Calu3 (cell line): ENCODE measurements at regions of chr1 and their contacts with region 1.

Region 1: DNA sequence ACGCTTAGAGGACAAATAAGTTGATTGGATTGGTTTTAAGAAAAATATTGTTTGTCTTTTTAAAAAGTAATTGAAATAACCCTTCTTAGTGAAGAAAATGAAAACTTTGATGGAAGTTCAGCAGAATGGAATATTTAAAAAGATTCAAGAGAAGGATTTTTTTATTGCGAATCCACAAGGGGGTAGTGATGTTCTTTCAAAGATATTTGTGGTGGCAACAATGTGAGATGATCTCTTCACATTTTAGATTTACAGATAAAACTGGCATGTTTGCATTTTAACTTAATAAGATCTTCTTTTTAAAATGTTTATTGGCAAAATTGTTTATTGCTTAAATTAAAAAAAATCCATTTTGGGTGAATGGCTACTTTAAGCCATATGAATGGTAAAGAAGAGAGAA is 8.9 kb downstream of the CAMTA1 start:
- DNase-seq: peak; percentile 21
- H3K4me3 Mint-ChIP-seq: no peak overlapping the region
- H3K27ac Mint-ChIP-seq: no peak overlapping the region
- H3K4me1 Mint-ChIP-seq: peaks cover 6% of the 10 kb centered on the region
- H3K27me3 Mint-ChIP-seq: no peaks in the 10 kb centered on the region
- CTCF ChIP-seq: peak; percentile 14

Region 2: DNA sequence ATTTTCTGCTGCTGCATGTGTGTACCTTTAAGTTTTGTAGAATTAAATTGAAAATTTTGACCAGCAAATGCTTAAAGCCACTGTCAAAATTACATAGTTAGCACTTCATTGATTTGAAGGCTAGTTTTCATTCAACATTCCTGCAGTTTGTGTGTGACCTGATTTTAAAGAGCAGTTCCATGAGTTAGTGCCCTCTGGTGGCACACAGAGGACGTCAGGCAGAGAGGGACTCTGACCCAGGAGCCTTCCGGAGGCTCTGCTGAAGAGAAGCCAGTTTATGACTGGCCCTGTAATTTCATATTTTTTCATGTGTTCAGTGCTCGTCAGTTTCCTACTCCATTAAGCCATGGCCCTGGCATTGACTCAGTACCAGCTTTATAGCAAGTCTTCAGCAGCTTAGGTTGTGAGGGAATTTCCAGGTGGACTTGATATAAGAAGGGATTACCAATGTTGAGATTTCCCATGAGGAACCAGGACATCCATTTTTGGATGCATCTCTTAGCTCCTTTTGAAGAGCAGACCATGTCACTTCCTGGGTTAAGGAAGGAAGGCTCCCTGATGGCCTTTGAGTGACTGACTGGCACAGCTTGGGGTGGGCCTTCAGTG is 95.8 kb after region 1 on chr1:
- CTCF ChIA-PET with region 1: interaction called, 3 read pairs
- intact Hi-C with region 1: loop called (anchors 2 kb)
- DNase-seq: peak; percentile 57
- H3K4me3 Mint-ChIP-seq: no peak overlapping the region
- H3K27ac Mint-ChIP-seq: no peak overlapping the region
- H3K4me1 Mint-ChIP-seq: peaks cover 9% of the 10 kb centered on the region
- H3K27me3 Mint-ChIP-seq: no peaks in the 10 kb centered on the region
- CTCF ChIP-seq: peak; percentile 56

Region 3: GRCh38 chr1:7070389-7071029 is 276.3 kb after region 1 on chr1:
- CTCF ChIA-PET with region 1: no interaction called
- intact Hi-C with region 1: loop called (anchors 2 kb)
- DNase-seq: peak; percentile 67
- H3K4me3 Mint-ChIP-seq: no peak overlapping the region
- H3K27ac Mint-ChIP-seq: no peak overlapping the region
- H3K4me1 Mint-ChIP-seq: no peaks in the 10 kb centered on the region
- H3K27me3 Mint-ChIP-seq: peaks cover 60% of the 10 kb centered on the region
- CTCF ChIP-seq: peak; percentile 80

Region 4: DNA sequence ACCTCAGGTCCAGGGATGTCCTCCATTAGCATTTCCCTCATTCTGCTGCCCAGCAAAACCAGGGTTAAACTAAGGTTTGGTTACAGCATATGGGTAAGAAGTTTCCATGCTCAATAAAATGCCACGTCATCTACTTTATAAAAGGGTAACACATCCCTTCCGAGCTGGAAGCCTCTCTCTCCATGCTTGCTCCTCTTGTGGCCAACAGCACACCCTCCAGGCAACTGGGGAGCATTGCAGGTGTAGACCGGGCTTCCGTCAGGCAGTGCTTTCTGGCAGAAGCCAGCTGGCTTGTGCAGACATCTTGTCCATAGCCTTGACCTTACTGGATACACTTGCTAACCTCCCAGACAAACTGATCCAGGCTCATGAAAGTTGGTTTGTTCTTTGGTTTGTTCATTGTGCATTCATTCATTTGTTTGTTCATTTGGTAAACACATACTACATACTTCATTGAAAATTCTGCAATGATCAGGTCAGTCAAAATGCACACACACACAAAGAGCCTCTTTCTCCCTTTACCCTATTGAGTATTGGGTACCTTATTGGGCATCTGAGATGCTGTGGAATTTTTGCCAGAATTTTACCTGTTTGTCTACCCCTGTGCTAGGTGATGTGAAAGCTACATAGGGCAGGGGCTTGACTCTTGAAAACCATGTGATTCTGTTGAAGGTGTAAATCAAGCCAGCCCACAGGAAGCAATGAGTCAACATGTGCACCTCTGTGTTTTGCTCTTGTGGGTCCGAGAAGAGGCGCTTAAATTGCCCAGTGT is 413.9 kb after region 1 on chr1:
- CTCF ChIA-PET with region 1: interaction called, 3 read pairs
- intact Hi-C with region 1: loop called (anchors 2 kb)
- DNase-seq: peak; percentile 73
- H3K4me3 Mint-ChIP-seq: no peak overlapping the region
- H3K27ac Mint-ChIP-seq: no peak overlapping the region
- H3K4me1 Mint-ChIP-seq: peaks cover 7% of the 10 kb centered on the region
- H3K27me3 Mint-ChIP-seq: peaks cover 48% of the 10 kb centered on the region
- CTCF ChIP-seq: peak; percentile 64